Vagina (tissue), 2 donors: ENCODE measurements at regions of chr17 and their contacts with region 1.

Region 1: GRCh38 chr17:38742411-38743308 is 5.5 kb downstream of the PCGF2 start:
- DNase-seq: no peak
- H3K4me3 ChIP-seq: peak overlapping the region in 1 of 2 donors; percentile 28
- H3K27ac ChIP-seq: peak overlapping the region; percentile 59
- H3K4me1 ChIP-seq: peaks cover 48% of the 10 kb centered on the region
- H3K27me3 ChIP-seq: no peaks in the 10 kb centered on the region
- CTCF ChIP-seq: no peak
- POLR2A ChIP-seq: no peak

Region 2: GRCh38 chr17:38702166-38702899 is 40.3 kb before region 1 on chr17:
- intact Hi-C with region 1: loop called (anchors 5 kb)
- DNase-seq: no peak
- H3K4me3 ChIP-seq: peak overlapping the region; percentile 92 to 97
- H3K27ac ChIP-seq: peak overlapping the region; percentile 98
- H3K4me1 ChIP-seq: peaks cover 31% of the 10 kb centered on the region
- H3K27me3 ChIP-seq: no peaks in the 10 kb centered on the region
- CTCF ChIP-seq: no peak
- POLR2A ChIP-seq: peak in 1 of 2 donors; percentile 80

Region 3: DNA sequence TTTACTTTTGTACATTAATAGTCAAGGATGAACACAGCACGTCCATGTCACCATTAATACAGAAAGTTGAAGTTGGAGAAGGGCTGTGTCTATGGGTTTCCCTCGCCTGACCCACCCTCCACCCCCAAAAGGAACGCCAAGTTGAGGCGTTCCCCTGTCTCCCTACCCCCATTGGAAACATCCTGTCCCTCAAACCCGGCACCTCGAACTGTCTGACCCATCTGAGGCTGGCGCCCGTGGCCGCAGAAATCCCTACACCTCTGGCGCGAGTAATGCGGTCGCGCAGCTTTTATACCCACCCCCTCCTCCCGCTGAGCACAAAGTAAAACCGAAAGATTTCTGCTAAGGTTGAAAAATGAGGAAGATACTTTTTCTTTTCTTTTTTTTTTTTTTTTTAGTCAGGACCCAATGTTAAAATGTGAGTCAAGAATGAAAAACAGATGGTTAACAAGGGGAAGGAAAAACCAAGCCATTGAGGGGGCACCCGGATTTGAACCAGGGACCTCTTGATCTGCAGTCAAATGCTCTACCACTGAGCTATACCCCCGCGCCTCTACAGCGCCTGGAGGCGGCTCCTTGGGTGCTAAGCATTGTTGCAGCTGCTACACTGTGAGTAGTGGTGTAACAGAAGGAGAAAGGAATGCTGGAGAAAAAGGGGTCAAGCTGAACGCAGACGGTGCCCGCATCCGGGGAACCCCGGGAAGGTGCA is 126.3 kb after region 1 on chr17:
- intact Hi-C with region 1: no loop called
- DNase-seq: peak in 1 of 2 donors; percentile 98
- H3K4me3 ChIP-seq: peak overlapping the region; percentile 91 to 96
- H3K27ac ChIP-seq: peak overlapping the region; percentile 95
- H3K4me1 ChIP-seq: peaks cover 44% of the 10 kb centered on the region
- H3K27me3 ChIP-seq: no peaks in the 10 kb centered on the region
- CTCF ChIP-seq: no peak
- POLR2A ChIP-seq: peak in 1 of 2 donors; percentile 12